Lower lobe of right lung (tissue), 2 donors: ENCODE measurements at regions of chr1 and their contacts with region 1.

Region 1: GRCh38 chr1:109984456-109985275 is at the start of gene AHCYL1:
- DNase-seq: peak; percentile 100
- ATAC-seq: peak; percentile 98
- H3K4me3 ChIP-seq: peak within 1 kb of the TSS; percentile 85
- H3K27ac ChIP-seq: peak within 1 kb of the TSS; percentile 97
- H3K4me1 ChIP-seq: peaks cover 71% of the 10 kb centered on the region
- H3K27me3 ChIP-seq: no peaks in the 10 kb centered on the region
- CTCF ChIP-seq: peak; percentile 98
- total RNA-seq, gene AHCYL1: 83.9 TPM

Region 2: DNA sequence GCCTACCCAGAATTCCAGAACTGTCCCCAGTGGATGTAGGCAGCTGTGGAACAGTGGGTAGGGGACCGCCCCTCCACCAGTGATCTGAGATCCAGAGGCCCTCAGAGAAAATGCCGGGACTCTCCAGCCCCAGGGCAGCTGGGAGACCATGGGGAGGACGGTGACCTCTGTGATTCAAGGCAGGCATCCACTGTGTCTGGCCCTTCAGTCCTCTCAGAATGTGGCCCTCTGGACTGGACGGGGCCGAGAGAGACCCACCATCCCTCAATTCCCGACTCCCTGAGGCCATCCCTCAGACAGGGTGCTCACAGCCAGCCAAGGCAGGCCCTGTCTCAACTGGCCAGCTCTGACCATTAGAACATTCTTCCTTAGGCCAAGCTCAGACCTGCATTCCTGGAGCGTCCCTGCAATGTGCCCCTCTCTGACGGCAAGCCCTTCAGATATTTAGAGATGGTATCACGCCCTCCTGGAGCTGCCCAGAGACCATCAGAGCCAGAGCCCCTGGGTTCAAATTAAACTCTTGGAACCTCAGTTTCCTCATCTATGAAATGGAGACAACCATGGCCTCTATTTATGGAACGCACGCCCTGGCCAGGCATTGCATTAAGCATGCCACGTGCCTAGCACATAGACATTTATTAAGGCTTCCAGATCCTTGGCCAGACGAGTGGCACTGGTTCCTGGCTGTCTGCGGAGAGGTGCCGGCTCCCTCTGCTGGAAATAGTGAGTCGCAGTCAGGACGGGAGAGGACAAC is 211.3 kb before region 1 on chr1:
- intact Hi-C with region 1: loop called (anchors 5 kb)
- DNase-seq: peak; percentile 86
- ATAC-seq: peak; percentile 87 to 91
- H3K4me3 ChIP-seq: no peak overlapping the region
- H3K27ac ChIP-seq: no peak overlapping the region
- H3K4me1 ChIP-seq: peaks cover 19% of the 10 kb centered on the region
- H3K27me3 ChIP-seq: no peaks in the 10 kb centered on the region
- CTCF ChIP-seq: peak; percentile 91

Region 3: DNA sequence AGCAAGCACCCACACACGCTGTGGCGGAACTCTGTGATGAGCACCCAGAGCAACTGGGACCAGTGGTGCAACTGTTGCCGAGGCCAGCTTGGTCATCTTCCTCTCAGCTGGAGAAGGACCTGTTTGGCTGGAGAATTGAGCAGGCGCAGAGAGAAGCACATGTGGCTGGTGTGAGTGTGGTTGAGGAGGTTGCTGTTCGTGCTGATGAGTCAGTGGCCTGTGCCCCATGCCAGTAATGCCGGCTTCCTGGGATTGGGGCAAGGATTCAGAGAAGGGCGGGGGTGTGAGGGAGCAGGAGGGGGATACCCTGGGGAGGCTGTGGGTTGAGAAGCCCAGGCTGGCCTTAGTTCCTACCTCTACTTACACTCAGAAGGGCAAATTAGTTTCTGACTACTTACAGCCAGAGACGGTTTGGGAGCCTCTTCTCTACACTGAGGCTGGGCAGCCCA is 163.4 kb before region 1 on chr1:
- intact Hi-C with region 1: no loop called
- DNase-seq: peak; percentile 84
- ATAC-seq: peak; percentile 66 to 73
- H3K4me3 ChIP-seq: no peak overlapping the region
- H3K27ac ChIP-seq: peak overlapping the region; percentile 51
- H3K4me1 ChIP-seq: peaks cover 85% of the 10 kb centered on the region
- H3K27me3 ChIP-seq: no peaks in the 10 kb centered on the region
- CTCF ChIP-seq: no peak

Region 4: DNA sequence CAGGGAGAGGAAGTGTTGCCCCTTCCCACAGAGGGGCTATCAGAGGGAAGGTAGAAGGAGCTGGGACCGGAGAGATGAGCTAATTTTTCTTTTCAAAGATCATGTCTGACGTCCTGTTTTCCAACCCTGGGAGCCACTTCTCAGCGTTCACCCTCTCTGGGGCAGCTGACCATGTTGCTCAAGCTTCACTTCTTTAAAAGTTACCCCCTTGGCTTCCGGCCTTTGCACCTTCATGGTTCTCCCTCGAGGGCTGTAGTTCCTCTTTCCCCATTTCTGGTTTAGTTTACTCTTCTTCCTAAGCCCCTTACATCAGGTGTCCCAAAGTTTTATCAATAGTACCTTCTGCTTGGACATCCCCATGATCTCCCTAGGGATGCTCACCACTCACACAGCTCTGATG is 97.8 kb before region 1 on chr1:
- intact Hi-C with region 1: no loop called
- DNase-seq: peak; percentile 62
- ATAC-seq: peak; percentile 55 to 67
- H3K4me3 ChIP-seq: no peak overlapping the region
- H3K27ac ChIP-seq: no peak overlapping the region
- H3K4me1 ChIP-seq: peaks cover 53% of the 10 kb centered on the region
- H3K27me3 ChIP-seq: no peaks in the 10 kb centered on the region
- CTCF ChIP-seq: no peak